ENCODE measurements at regions of chr17 and their contacts with region 1.

Region 1: DNA sequence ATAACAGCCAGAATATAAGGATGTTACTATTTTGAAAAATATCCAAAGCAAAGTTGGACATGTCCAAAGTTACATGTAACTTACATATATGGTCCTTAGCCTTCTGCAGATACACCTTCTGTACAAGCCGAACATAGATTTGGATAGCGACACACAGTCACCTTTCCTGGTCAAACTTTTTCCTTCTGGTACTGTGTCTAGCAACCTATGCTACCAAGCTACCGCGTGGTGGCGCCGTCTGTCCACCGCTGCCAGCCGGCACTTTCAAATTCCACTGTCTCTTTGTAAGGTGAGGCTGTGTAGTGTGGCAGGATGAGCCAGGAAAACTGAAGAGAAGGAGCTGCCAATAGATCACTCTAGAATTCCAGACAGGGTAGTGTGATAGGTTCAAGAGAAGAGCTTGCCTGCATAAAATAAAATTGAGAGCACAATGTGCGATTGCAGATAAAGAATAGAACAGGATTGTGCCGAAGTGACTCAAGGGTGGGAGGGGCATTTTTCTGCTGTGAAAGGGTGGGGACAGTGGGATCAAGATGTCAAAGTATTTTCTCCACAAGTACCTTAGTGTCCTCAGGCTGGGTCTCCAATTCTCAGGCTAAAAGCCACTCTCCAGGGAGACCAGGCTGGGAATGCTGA is 366.9 kb downstream of the SLC39A11 start:
- DNase-seq: peak; percentile 66
- H3K4me3 Mint-ChIP-seq: no peak overlapping the region
- H3K27ac Mint-ChIP-seq: peak overlapping the region; percentile 96
- H3K4me1 Mint-ChIP-seq: peaks cover 69% of the 10 kb centered on the region
- H3K27me3 Mint-ChIP-seq: no peaks in the 10 kb centered on the region

Region 2: DNA sequence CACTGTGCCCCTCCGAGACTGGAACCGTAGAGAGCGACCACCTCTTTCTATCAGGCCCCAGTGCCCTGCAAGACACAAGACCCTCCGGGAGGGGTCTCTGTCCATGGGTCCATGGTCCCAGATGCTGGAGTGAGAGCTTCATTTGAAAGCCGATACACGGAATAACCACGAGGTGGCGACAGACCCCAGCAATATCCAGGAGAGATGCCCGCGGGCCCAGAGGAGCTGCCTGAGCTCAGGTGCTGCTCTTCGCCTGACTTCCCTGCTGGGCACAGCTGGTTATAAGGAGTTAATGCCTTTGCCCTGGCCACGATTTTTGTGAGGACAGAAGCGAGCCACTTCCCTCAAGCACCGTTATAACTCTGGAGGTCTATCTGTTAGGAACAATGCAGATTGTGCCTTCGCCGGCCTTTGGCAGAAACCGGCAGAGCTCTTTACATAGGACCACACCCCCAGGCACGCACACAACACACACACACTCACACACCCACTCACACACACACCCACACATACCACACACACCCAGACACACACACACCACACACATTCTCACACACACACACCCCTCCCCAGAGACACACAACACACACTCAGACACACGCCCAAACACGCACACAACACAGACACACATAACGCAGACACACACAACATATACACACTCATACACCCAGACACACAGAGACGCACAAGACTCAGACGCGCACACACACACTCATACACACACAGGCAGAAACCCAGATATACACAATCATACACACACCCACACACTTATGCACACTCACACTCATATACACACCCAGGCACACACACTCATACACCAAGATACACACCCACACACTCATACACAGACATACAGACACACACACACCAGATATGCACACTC is 168.4 kb before region 1 on chr17:
- CTCF ChIA-PET with region 1: interaction called, 234 read pairs
- DNase-seq: peak; percentile 82
- H3K4me3 Mint-ChIP-seq: no peak overlapping the region
- H3K27ac Mint-ChIP-seq: no peak overlapping the region
- H3K4me1 Mint-ChIP-seq: peaks cover 5% of the 10 kb centered on the region
- H3K27me3 Mint-ChIP-seq: peaks cover 7% of the 10 kb centered on the region

Region 3: DNA sequence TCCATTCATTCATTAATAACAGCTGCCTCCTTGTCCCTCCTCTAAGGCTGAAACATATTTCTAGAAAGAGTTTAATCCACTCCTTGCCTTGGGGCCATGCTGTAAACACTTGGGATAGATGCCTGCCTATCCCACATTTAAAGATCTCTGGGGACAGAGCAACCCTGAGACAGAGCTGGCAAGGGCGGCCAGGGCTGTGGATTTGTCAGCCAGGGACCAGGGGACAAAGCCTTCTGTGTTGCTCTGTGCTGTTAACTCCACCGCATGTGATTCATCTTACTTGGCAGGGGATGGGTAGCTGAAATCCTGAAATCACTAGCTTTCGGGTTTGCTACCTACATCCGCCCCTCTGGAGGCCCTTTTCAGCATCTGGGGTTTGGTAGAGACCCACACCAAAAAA is 26.0 kb before region 1 on chr17:
- CTCF ChIA-PET with region 1: interaction called, 15 read pairs
- DNase-seq: no peak
- H3K4me3 Mint-ChIP-seq: no peak overlapping the region
- H3K27ac Mint-ChIP-seq: no peak overlapping the region
- H3K4me1 Mint-ChIP-seq: peaks cover 3% of the 10 kb centered on the region
- H3K27me3 Mint-ChIP-seq: peaks cover 8% of the 10 kb centered on the region

Region 4: DNA sequence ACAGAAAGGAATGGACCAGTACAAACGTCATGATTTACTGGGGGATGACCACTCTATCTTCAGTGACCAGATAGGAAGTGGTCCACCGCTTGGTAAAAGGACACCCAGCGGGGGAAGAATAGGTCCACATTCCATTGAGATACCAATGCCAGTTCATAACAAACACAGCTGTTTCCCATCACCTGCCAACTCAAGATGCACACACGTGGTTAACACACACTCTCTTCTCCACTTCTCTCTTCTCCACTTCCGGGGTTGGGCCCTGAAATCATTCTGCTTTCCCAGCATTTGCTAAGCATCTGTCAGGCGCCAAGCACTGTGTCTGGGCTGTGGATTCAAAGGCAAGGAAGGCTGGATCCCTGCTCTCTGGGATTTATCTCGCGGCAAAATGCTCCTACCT is 191.4 kb after region 1 on chr17:
- CTCF ChIA-PET with region 1: no interaction called
- DNase-seq: no peak
- H3K4me3 Mint-ChIP-seq: no peak overlapping the region
- H3K27ac Mint-ChIP-seq: no peak overlapping the region
- H3K4me1 Mint-ChIP-seq: no peaks in the 10 kb centered on the region
- H3K27me3 Mint-ChIP-seq: no peaks in the 10 kb centered on the region

Region 5: DNA sequence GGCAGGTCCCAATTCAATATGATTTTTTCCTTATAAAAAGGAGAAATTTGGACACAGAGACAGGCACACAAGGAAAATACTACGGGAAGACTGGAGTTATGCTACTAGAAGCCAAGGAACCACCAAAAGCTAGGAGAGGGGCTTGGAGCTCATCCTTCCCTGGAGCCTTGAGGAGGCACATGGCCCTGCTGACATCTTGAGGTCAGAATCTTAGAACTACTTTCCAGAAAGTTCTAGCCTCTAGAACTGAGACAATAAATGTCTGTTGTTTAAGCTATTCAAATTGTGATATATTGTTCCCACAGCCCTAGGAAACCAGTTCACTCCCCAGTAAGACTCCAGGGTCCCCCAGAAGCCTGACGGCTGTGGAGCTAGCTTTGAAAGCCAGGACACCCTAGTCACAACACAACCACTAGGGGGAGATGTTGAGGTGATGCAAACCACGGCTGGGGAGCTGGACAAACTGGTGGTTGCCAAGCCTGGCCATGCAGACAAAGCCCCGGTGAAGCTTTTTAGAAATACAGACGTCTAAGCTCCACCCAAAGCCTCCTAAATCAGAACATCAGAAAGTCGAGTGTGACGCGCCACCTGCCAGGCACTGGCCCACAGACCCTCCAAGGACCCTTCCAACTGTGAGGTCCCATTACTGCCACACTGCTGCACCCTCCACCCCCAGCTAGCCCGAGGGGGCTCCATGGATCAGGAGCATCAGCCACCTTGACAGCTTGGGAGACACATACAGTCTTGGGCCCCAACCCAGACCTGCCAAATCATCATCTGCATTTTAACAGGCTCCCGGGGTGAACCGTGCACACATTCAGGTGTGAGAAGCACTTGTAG is 260.6 kb after region 1 on chr17:
- CTCF ChIA-PET with region 1: interaction called, 19 read pairs
- DNase-seq: peak; percentile 64
- H3K4me3 Mint-ChIP-seq: no peak overlapping the region
- H3K27ac Mint-ChIP-seq: no peak overlapping the region
- H3K4me1 Mint-ChIP-seq: no peaks in the 10 kb centered on the region
- H3K27me3 Mint-ChIP-seq: no peaks in the 10 kb centered on the region

Region 6: DNA sequence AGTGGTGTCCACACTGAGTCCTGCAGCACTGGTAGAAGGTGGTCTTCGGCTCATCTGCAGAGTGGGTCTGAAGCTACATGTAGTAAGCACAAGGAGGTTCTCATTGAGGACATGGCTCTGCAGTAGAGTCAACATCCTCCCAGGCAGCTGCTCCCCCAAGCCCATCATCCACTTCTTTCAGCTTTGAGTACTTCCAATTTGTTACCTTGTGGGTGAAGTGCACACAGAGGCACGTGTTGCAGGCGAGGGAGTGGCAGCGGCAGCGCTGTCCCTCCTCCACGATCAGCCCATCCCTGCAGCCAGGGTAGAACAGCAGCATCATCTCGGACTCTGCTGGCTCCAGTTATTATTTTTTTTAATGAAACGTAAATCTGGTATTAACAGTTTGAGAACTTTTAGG is 437.5 kb after region 1 on chr17:
- CTCF ChIA-PET with region 1: interaction called, 92 read pairs
- DNase-seq: no peak
- H3K4me3 Mint-ChIP-seq: no peak overlapping the region
- H3K27ac Mint-ChIP-seq: no peak overlapping the region
- H3K4me1 Mint-ChIP-seq: peaks cover 35% of the 10 kb centered on the region
- H3K27me3 Mint-ChIP-seq: peaks cover 93% of the 10 kb centered on the region

Region 7: GRCh38 chr17:73231841-73232586 is 506.5 kb after region 1 on chr17:
- CTCF ChIA-PET with region 1: interaction called, 17 read pairs
- DNase-seq: peak; percentile 96
- H3K4me3 Mint-ChIP-seq: peak overlapping the region; percentile 83
- H3K27ac Mint-ChIP-seq: peak overlapping the region; percentile 95
- H3K4me1 Mint-ChIP-seq: peaks cover 63% of the 10 kb centered on the region
- H3K27me3 Mint-ChIP-seq: no peaks in the 10 kb centered on the region

Region 8: GRCh38 chr17:73255671-73256181 is 530.2 kb after region 1 on chr17:
- CTCF ChIA-PET with region 1: interaction called, 31 read pairs
- DNase-seq: peak; percentile 68
- H3K4me3 Mint-ChIP-seq: no peak overlapping the region
- H3K27ac Mint-ChIP-seq: no peak overlapping the region
- H3K4me1 Mint-ChIP-seq: no peaks in the 10 kb centered on the region
- H3K27me3 Mint-ChIP-seq: no peaks in the 10 kb centered on the region